Gastrocnemius medialis (tissue), 4 donors: ENCODE measurements at regions of chr7 and their contacts with region 1.

Region 1: GRCh38 chr7:74401137-74401859 is 52.4 kb upstream of the GTF2IRD1 start:
- DNase-seq: peak in 1 of 2 donors; percentile 41
- ATAC-seq: peak; percentile 65 to 71
- H3K4me3 ChIP-seq: no peak overlapping the region
- H3K27ac ChIP-seq: no peak overlapping the region
- H3K4me1 ChIP-seq: no peaks in the 10 kb centered on the region
- H3K27me3 ChIP-seq: no peaks in the 10 kb centered on the region
- CTCF ChIP-seq: peak; percentile 85 to 99 (median 95)
- POLR2A ChIP-seq: no peak

Region 2: DNA sequence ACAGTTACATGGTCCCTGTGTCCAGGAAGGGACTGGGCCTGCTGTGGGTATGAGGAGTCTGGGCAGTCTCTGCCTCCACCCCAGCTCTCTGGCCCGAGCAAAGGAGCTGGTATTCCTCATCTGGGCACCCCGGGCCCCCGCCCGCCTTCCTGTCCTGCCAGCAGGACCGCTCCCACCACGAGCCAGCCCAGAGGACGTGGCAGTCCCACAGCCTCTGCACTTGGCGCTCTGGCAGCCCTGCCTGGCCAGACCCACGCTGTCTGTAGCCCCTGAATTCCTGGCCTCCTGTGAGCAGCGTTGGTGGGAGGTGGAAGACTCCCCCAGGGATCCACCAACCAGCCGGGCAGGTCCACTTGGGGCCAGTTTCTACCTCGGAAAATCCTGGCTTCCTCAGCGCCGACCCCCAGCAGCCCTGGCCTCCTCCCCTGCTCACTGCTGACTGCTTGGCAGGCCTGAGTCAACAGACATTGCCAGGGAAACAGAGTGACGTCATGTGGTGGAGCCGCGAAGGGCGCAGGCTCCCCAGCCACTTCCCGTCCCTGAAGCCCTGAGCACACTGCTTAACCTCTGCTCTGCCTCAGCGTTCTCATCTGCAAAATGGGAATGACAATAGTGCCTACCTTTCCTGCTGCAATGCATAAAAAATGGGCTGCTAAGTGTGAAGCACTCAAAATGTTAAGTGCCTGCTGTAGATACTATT is 339.3 kb before region 1 on chr7:
- in situ Hi-C with region 1: loop called (anchors 5 to 25 kb)
- intact Hi-C with region 1: no loop called
- DNase-seq: peak in 1 of 2 donors; percentile 54
- ATAC-seq: peak; percentile 52 to 65
- H3K4me3 ChIP-seq: no peak overlapping the region
- H3K27ac ChIP-seq: peak overlapping the region; percentile 38 to 52 (median 46)
- H3K4me1 ChIP-seq: peaks cover 3 to 18% of the 10 kb centered on the region in 2 donors
- H3K27me3 ChIP-seq: no peaks in the 10 kb centered on the region
- CTCF ChIP-seq: no peak
- POLR2A ChIP-seq: peak in 1 of 2 donors; percentile 11

Region 3: GRCh38 chr7:74206589-74207120 is 194.6 kb before region 1 on chr7:
- in situ Hi-C with region 1: loop called (anchors 5 to 10 kb)
- intact Hi-C with region 1: loop called (anchors 1 kb)
- DNase-seq: peak; percentile 61 to 78
- ATAC-seq: peak; percentile 72 to 89
- H3K4me3 ChIP-seq: peak overlapping the region; percentile 17 to 44 (median 36)
- H3K27ac ChIP-seq: no peak overlapping the region
- H3K4me1 ChIP-seq: no peaks in the 10 kb centered on the region
- H3K27me3 ChIP-seq: no peaks in the 10 kb centered on the region
- CTCF ChIP-seq: peak; percentile 94 to 100 (median 96)
- POLR2A ChIP-seq: no peak

Region 4: DNA sequence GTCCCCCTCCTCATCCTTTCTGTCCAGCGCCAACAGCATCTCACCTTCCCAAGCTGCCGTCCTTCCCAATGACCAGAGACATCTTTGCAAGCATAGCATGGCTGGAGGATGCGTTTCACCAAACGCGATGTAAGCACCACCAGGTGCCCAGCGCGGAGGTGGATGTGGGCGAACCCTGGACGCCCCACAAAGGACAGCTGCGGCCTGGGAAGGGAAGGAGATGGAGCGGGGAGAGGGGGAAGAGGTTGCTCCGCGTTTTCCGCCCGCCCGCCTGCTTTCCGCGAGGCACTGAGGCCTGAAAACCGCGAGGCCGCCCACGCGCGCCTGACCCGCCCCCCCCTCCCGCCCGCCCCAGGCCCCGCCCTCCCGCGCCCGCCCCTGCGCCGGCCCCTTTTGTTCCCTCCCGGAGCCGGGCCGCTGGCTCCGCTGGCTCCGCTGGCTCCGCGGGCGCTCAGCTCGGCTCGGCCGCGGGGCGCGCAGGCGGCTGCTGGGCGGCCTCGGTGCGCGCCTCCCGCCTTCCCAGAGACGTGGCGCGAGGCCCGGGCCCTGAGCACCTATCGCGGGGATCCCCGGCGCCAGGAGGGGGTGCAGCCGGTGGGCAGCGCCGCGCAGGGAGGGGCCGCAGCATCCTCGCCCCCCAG is 112.2 kb before region 1 on chr7 and contains the start of gene CLIP2:
- in situ Hi-C with region 1: no loop called
- intact Hi-C with region 1: loop called (anchors 10 kb)
- DNase-seq: peak; percentile 41 to 63
- ATAC-seq: peak; percentile 73 to 82
- H3K4me3 ChIP-seq: peak within 1 kb of the TSS; percentile 63 to 76 (median 66)
- H3K27ac ChIP-seq: peak within 1 kb of the TSS; percentile 34 to 70 (median 62)
- H3K4me1 ChIP-seq: peaks cover 8 to 22% of the 10 kb centered on the region in 2 donors
- H3K27me3 ChIP-seq: no peaks in the 10 kb centered on the region
- CTCF ChIP-seq: peak in 1 of 5 experiments; percentile 10
- POLR2A ChIP-seq: peak; percentile 14 to 51
- total RNA-seq, gene CLIP2: 2.0 to 10.0 (median 4.2) TPM